Activated T-helper 1 cell treated with anti-CD3 and anti-CD28 coated beads, Interleukin-12 subunit alpha, Interleukin-12 subunit beta, Interleukin-2, Interleukin-4 antibody, amounts not matched to agents 30 ng/mL and 10 ng/mL and 1 ng/mL, durations not matched to agents 14 hours and 24 hours and 36 hours (primary cell): ENCODE measurements at regions of chr12 and their contacts with region 1.

Region 1: GRCh38 chr12:59431266-59431665 is 164.6 kb upstream of the SLC16A7 start:
- DNase-seq: no peak
- H3K4me3 Mint-ChIP-seq: no peak overlapping the region
- H3K27ac Mint-ChIP-seq: no peak overlapping the region
- H3K4me1 Mint-ChIP-seq: no peaks in the 10 kb centered on the region
- H3K27me3 Mint-ChIP-seq: peaks cover 3% of the 10 kb centered on the region

Region 2: GRCh38 chr12:59834659-59835474 is 403.6 kb after region 1 on chr12:
- intact Hi-C with region 1: loop called (anchors 1 kb)
- DNase-seq: no peak
- H3K4me3 Mint-ChIP-seq: no peak overlapping the region
- H3K27ac Mint-ChIP-seq: no peak overlapping the region
- H3K4me1 Mint-ChIP-seq: no peaks in the 10 kb centered on the region
- H3K27me3 Mint-ChIP-seq: peaks cover 2% of the 10 kb centered on the region